T-cell (primary cell): ENCODE measurements at regions of chr13 and their contacts with region 1.

Region 1: DNA sequence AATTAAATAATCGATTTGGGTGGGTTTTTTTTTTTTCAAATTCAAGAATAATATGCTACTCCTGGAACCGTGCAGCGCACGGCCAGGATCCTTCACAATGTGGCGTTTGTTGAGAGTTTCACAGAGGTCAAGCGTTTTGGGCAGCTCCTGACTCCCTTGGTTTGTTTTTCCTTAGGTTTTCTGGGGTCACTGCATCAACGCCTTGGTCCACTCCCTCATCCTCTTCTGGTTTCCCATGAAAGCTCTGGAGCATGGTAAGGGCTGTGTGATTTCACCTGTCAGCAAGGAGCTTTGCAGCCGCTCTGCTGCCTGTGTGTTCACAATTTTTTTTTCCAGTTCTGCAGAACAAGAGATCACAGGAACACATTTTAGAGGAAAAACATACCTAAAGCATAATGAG is 212.4 kb downstream of the SHISA2 start:
- DNase-seq: no peak
- ATAC-seq: no peak
- H3K4me3 ChIP-seq: no peak overlapping the region
- H3K4me3 Mint-ChIP-seq: no peak overlapping the region
- H3K27ac ChIP-seq: no peak overlapping the region
- H3K27ac Mint-ChIP-seq: no peak overlapping the region
- H3K4me1 ChIP-seq: no peaks in the 10 kb centered on the region
- H3K4me1 Mint-ChIP-seq: peaks cover 0 to 12% (median 6%) of the 10 kb centered on the region in 3 donors
- H3K27me3 ChIP-seq: peaks cover 0 to 3% of the 10 kb centered on the region in 2 experiments
- H3K27me3 Mint-ChIP-seq: peaks cover 2 to 3% of the 10 kb centered on the region in 2 donors

Region 2: DNA sequence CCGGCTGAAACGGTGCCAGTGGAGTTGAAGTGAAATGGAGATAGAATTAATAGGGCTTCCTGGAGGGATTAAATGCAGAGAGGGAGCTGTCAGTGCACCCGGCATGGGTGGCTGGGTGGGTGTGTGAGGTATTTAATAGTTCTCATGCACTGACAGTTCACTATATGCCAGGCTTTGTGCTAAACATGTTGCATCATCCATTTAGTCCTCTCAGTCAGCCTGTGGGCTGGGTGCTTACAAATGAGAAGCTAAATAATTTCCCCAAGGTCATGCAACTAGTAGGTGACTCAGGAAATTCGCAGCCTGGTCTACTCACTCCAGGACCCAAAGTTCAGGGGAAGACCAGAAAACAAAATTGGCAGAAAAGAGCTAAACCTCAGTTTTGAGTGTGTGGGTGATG is 1742.3 kb before region 1 on chr13:
- CTCF ChIA-PET with region 1: no interaction called
- POLR2A ChIA-PET with region 1: interaction called in 1 of 2 experiments, 14 read pairs
- DNase-seq: no peak
- ATAC-seq: peak in 1 of 4 experiments; percentile 49
- H3K4me3 ChIP-seq: no peak overlapping the region
- H3K4me3 Mint-ChIP-seq: peak overlapping the region in 1 of 3 donors; percentile 37
- H3K27ac ChIP-seq: no peak overlapping the region
- H3K27ac Mint-ChIP-seq: no peak overlapping the region
- H3K4me1 ChIP-seq: peaks cover 14 to 17% of the 10 kb centered on the region in 2 experiments
- H3K4me1 Mint-ChIP-seq: peaks cover 16 to 22% (median 17%) of the 10 kb centered on the region in 3 donors
- H3K27me3 ChIP-seq: no peaks in the 10 kb centered on the region
- H3K27me3 Mint-ChIP-seq: no peaks in the 10 kb centered on the region